ENCODE measurements at regions of chr15 and their contacts with region 1.

Region 1: GRCh38 chr15:72272213-72273002 is at the start of gene PARP6:
- DNase-seq: peak; percentile 98 to 100 (median 100)
- H3K4me3 ChIP-seq: peak within 1 kb of the TSS; percentile 26 to 65
- H3K4me3 Mint-ChIP-seq: peak within 1 kb of the TSS; percentile 85 to 93 (median 88)
- H3K27ac ChIP-seq: peak within 1 kb of the TSS; percentile 87
- H3K27ac Mint-ChIP-seq: peak within 1 kb of the TSS; percentile 93 to 97 (median 95)
- H3K4me1 ChIP-seq: peaks cover 34% of the 10 kb centered on the region
- H3K4me1 Mint-ChIP-seq: peaks cover 27 to 43% (median 36%) of the 10 kb centered on the region in 4 donors
- H3K27me3 ChIP-seq: no peaks in the 10 kb centered on the region
- H3K27me3 Mint-ChIP-seq: no peaks in the 10 kb centered on the region
- total RNA-seq, gene PARP6: 111 TPM

Region 2: DNA sequence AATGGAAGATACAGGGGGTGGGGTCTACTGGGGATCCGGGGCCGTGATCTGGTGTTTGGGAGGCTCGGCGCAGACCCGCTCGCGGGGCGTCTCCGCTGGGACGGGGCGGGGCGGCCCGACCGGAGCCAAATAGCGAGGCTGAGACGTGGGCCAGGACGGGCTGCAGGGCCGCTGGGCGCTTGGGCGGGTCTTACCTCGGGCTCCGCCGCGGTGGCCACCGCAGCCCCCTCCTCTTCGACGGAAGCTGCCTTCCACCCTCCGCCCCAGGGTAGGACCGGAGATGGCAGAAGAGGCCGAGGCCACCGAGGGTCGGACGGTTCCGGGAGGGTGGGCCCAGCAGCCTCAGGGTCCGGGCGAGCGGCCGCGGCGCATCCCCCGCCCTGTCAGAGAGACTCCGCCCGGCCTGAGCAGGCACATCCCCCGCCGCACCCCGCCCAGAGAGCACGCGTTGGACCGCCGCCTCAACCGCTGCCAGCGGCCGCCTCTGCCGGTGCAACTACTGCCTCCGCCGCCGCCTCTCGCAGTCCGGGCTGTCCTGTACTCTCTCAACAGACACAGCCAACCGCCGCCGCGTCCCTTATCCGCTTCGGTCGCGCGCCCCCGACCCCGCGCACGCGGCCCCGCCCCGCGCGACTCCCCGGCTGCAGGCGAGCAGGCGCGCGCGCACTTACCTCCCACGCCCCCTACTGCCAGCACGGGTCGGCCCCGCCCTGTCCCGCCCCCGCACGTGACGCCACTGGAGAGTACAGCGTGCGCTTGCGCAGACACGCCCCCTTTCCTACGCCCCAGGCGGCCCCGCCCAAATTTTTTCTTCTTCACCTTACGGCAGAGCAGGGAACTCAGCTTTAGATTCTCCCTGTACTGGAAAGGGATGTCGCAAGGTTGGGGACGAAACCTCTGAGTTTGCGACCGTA is 154.7 kb before region 1 on chr15 and contains the start of gene MYO9A:
- CTCF ChIA-PET with region 1: no interaction called
- POLR2A ChIA-PET with region 1: no interaction called
- intact Hi-C with region 1: loop called (anchors 1 kb)
- DNase-seq: peak; percentile 97 to 98 (median 98)
- H3K4me3 ChIP-seq: peak within 1 kb of the TSS; percentile 89
- H3K4me3 Mint-ChIP-seq: peak within 1 kb of the TSS; percentile 93 to 100 (median 98)
- H3K27ac ChIP-seq: peak within 1 kb of the TSS; percentile 94
- H3K27ac Mint-ChIP-seq: peak within 1 kb of the TSS; percentile 96 to 99 (median 99)
- H3K4me1 ChIP-seq: peaks cover 23% of the 10 kb centered on the region
- H3K4me1 Mint-ChIP-seq: peaks cover 27 to 60% (median 41%) of the 10 kb centered on the region in 4 donors
- H3K27me3 ChIP-seq: no peaks in the 10 kb centered on the region
- H3K27me3 Mint-ChIP-seq: no peaks in the 10 kb centered on the region
- total RNA-seq, gene MYO9A: 37.9 to 44.0 TPM

Region 3: GRCh38 chr15:72319985-72320671 is 47.7 kb after region 1 on chr15 and contains the start of gene CELF6:
- CTCF ChIA-PET with region 1: no interaction called
- POLR2A ChIA-PET with region 1: no interaction called
- intact Hi-C with region 1: loop called (anchors 1 kb)
- DNase-seq: peak; percentile 77 to 95 (median 80)
- H3K4me3 ChIP-seq: peak within 1 kb of the TSS; percentile 29 to 59
- H3K4me3 Mint-ChIP-seq: peak within 1 kb of the TSS; percentile 70 to 92 (median 87)
- H3K27ac ChIP-seq: peak within 1 kb of the TSS; percentile 44
- H3K27ac Mint-ChIP-seq: peak within 1 kb of the TSS; percentile 90 to 97 (median 92)
- H3K4me1 ChIP-seq: peaks cover 15% of the 10 kb centered on the region
- H3K4me1 Mint-ChIP-seq: peaks cover 21 to 32% (median 25%) of the 10 kb centered on the region in 4 donors
- H3K27me3 ChIP-seq: no peaks in the 10 kb centered on the region
- H3K27me3 Mint-ChIP-seq: no peaks in the 10 kb centered on the region
- total RNA-seq, gene CELF6: 2.6 to 4.9 TPM